ENCODE measurements at regions of chr10 and their contacts with region 1.

Region 1: GRCh38 chr10:87763086-87763861 is 54.8 kb downstream of the ATAD1 start:
- DNase-seq: no peak

Region 2: DNA sequence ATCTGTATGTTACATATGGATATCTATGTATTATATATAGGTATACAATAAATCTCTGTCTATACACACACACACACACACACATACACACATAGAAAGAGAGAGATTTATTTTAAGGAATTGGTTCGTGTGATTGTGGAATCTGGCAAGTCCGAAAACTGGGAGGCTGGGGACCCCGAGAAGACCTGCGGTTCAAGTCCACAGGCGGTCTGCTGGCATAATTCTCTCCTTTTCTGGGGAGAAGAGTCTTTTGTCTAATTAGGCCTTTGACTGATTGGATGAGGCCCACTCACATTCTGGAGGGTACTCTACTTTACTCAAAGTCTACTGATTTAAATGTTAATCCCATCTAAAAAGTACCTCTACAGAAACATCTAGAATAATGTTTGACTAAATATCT is 38.5 kb before region 1 on chr10:
- intact Hi-C with region 1: loop called (anchors 1 kb)
- DNase-seq: no peak

Region 3: GRCh38 chr10:87861953-87862678 is 98.8 kb after region 1 on chr10:
- intact Hi-C with region 1: no loop called
- DNase-seq: peak; percentile 84 to 98 (median 90)